T-cell (primary cell): ENCODE measurements at regions of chr20 and their contacts with region 1.

Region 1: GRCh38 chr20:11766976-11767375 is 150.7 kb upstream of the BTBD3 start:
- DNase-seq: no peak
- ATAC-seq: no peak
- H3K4me3 ChIP-seq: no peak overlapping the region
- H3K4me3 Mint-ChIP-seq: no peak overlapping the region
- H3K27ac ChIP-seq: no peak overlapping the region
- H3K27ac Mint-ChIP-seq: no peak overlapping the region
- H3K4me1 ChIP-seq: no peaks in the 10 kb centered on the region
- H3K4me1 Mint-ChIP-seq: no peaks in the 10 kb centered on the region
- H3K27me3 ChIP-seq: no peaks in the 10 kb centered on the region
- H3K27me3 Mint-ChIP-seq: no peaks in the 10 kb centered on the region

Region 2: GRCh38 chr20:10398822-10399369 is 1368.1 kb before region 1 on chr20:
- CTCF ChIA-PET with region 1: interaction called in 1 of 2 experiments, 11 read pairs
- POLR2A ChIA-PET with region 1: no interaction called
- DNase-seq: no peak
- ATAC-seq: no peak
- H3K4me3 ChIP-seq: no peak overlapping the region
- H3K4me3 Mint-ChIP-seq: no peak overlapping the region
- H3K27ac ChIP-seq: no peak overlapping the region
- H3K27ac Mint-ChIP-seq: no peak overlapping the region
- H3K4me1 ChIP-seq: no peaks in the 10 kb centered on the region
- H3K4me1 Mint-ChIP-seq: no peaks in the 10 kb centered on the region
- H3K27me3 ChIP-seq: no peaks in the 10 kb centered on the region
- H3K27me3 Mint-ChIP-seq: no peaks in the 10 kb centered on the region

Region 3: DNA sequence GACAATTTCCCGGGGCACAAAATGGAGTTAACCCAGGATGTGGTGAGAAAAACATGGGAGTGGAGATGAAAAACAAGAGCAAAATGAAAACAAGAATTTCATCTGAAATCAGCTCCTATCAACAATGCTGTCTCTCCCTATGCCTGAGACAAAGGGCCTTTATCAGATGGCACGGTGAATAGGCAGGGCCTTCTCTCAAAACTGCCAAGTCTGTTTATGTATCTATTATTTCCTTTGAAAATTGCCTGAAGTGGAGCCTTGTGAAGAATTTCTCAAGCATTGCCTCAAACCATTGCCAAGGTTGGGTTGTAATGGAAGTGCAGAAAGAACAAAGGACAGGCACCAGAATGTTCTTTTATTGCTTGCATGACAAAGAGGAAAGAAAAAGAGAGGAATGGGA is 225.4 kb after region 1 on chr20:
- CTCF ChIA-PET with region 1: no interaction called
- POLR2A ChIA-PET with region 1: no interaction called
- DNase-seq: no peak
- ATAC-seq: no peak
- H3K4me3 ChIP-seq: no peak overlapping the region
- H3K4me3 Mint-ChIP-seq: no peak overlapping the region
- H3K27ac ChIP-seq: no peak overlapping the region
- H3K27ac Mint-ChIP-seq: no peak overlapping the region
- H3K4me1 ChIP-seq: no peaks in the 10 kb centered on the region
- H3K4me1 Mint-ChIP-seq: no peaks in the 10 kb centered on the region
- H3K27me3 ChIP-seq: no peaks in the 10 kb centered on the region
- H3K27me3 Mint-ChIP-seq: peaks cover 0 to 4% of the 10 kb centered on the region in 2 donors